Vagina (tissue), 2 donors: ENCODE measurements at regions of chr16 and their contacts with region 1.

Region 1: GRCh38 chr16:75687361-75687760 is 10.6 kb upstream of the CPHXL2 start:
- DNase-seq: no peak
- H3K4me3 ChIP-seq: no peak overlapping the region
- H3K27ac ChIP-seq: no peak overlapping the region
- H3K4me1 ChIP-seq: no peaks in the 10 kb centered on the region
- H3K27me3 ChIP-seq: no peaks in the 10 kb centered on the region
- CTCF ChIP-seq: no peak
- POLR2A ChIP-seq: no peak

Region 2: DNA sequence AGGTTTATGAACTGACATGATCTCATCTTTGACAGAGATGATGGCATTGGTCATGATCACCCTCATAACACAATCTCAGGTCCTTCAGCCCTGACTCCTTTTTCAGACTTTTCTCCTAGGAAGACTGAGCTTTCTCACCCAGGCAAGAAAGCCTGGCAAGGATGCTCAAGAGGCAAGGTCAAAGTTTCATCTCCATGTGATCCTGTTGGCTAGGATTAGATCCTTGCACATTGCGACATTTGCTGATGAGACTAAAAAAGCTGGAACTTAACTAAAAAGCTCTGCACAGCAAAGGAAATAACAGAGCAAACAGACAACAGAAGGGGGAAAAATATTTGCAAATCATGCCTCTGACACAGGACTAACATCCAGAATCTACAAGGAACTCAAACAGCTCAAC is 1834.8 kb before region 1 on chr16:
- intact Hi-C with region 1: loop called (anchors 5 kb)
- DNase-seq: no peak
- H3K4me3 ChIP-seq: no peak overlapping the region
- H3K27ac ChIP-seq: no peak overlapping the region
- H3K4me1 ChIP-seq: no peaks in the 10 kb centered on the region
- H3K27me3 ChIP-seq: no peaks in the 10 kb centered on the region
- CTCF ChIP-seq: no peak
- POLR2A ChIP-seq: no peak

Region 3: GRCh38 chr16:74807052-74807646 is 880.2 kb before region 1 on chr16:
- intact Hi-C with region 1: no loop called
- DNase-seq: no peak
- H3K4me3 ChIP-seq: no peak overlapping the region
- H3K27ac ChIP-seq: no peak overlapping the region
- H3K4me1 ChIP-seq: no peaks in the 10 kb centered on the region
- H3K27me3 ChIP-seq: no peaks in the 10 kb centered on the region
- CTCF ChIP-seq: no peak
- POLR2A ChIP-seq: no peak

Region 4: DNA sequence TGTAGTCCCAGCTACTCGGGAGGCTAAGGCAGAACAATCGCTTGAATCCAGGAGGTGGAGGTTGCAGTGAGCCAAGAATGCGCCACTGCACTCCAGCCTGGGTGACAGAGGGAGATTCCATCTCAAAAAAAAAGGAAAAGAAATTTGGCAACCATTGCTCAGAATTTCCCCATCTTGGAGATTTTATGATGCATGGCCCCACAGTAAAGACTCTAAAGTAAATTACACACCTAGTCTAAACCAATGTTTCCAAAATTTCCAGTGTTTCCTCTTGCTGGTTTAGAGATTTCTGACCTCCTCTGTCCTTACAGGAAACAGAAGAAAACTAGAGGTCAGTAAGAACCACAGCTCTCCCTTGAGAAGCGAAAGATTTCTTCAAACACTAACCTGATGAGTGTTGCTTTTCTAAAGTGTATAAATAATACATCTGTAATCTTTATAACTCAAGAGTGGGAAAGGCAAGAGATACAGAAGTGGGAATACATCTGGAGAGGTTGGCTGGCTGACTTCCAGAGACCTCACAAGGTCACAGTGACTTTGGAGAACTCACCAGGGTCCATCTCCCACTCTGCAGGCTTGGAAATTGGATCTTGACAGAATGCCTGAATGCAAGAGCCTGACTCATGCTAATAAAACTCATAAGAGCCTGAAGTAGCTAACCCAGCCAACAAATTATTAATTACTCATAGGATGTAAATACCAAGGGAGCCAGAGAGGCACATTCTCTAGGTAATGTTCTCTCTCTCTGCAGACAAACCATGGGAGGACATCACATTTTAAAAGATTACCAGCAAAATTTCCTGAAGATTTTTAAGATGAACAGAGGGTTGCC is 73.1 kb before region 1 on chr16:
- intact Hi-C with region 1: no loop called
- DNase-seq: no peak
- H3K4me3 ChIP-seq: no peak overlapping the region
- H3K27ac ChIP-seq: no peak overlapping the region
- H3K4me1 ChIP-seq: no peaks in the 10 kb centered on the region
- H3K27me3 ChIP-seq: no peaks in the 10 kb centered on the region
- CTCF ChIP-seq: no peak
- POLR2A ChIP-seq: no peak

Region 5: DNA sequence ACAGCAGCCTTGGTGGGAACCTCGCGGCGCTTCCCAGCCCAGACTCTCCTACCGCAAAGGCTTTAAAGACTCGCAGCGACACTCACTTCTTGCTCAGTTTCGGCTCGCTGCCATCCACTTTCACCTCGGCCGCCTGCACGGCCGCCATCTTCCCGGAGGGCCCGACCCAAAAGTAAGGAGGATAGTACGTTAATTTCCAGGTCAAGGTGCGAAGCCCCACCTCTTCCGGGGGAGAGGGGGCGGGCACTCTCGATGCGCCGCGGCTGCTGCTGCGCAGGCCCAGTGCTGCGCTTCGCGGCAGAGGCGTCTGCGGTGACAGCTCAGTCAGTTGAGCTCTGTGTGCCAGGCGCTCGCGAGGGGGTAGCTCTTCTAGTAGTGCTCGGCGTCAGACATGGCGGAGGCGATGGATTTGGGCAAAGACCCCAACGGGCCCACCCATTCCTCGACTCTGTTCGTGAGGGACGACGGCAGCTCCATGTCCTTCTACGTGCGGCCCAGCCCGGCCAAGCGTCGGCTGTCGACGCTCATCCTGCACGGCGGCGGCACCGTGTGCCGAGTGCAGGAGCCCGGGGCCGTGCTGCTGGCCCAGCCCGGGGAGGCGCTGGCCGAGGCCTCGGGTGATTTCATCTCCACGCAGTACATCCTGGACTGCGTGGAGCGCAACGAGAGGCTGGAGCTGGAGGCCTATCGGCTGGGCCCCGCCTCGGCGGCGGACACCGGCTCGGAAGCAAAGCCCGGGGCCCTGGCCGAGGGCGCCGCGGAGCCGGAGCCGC is 39.7 kb before region 1 on chr16 and contains the starts of genes KARS1 and TERF2IP:
- intact Hi-C with region 1: no loop called
- DNase-seq: peak in 1 of 2 donors; percentile 96
- H3K4me3 ChIP-seq: peak within 1 kb of the TSS; percentile 90 to 100
- H3K27ac ChIP-seq: peak within 1 kb of the TSS; percentile 99
- H3K4me1 ChIP-seq: peaks cover 70% of the 10 kb centered on the region
- H3K27me3 ChIP-seq: no peaks in the 10 kb centered on the region
- CTCF ChIP-seq: peak in 1 of 3 experiments; percentile 20
- POLR2A ChIP-seq: peak in 1 of 2 donors; percentile 96
- total RNA-seq, gene KARS1: 82.0 TPM
- total RNA-seq, gene TERF2IP: 65.1 TPM